ENCODE measurements at regions of chr1 and their contacts with region 1.

Region 1: GRCh38 chr1:109213785-109214468 is at the start of gene SARS1:
- DNase-seq: peak; percentile 77 to 96 (median 91)
- ATAC-seq: peak; percentile 91
- H3K4me3 ChIP-seq: peak within 1 kb of the TSS; percentile 97
- H3K4me3 Mint-ChIP-seq: peak within 1 kb of the TSS; percentile 94 to 100 (median 98)
- H3K27ac ChIP-seq: peak within 1 kb of the TSS; percentile 85
- H3K27ac Mint-ChIP-seq: peak within 1 kb of the TSS; percentile 85 to 98 (median 97)
- H3K4me1 ChIP-seq: peaks cover 22 to 27% of the 10 kb centered on the region in 2 donors
- H3K4me1 Mint-ChIP-seq: peaks cover 33 to 47% (median 42%) of the 10 kb centered on the region in 7 donors
- H3K27me3 ChIP-seq: no peaks in the 10 kb centered on the region
- H3K27me3 Mint-ChIP-seq: peaks cover 0 to 4% (median 0%) of the 10 kb centered on the region in 5 donors
- total RNA-seq, gene SARS1: 110 to 173 (median 135) TPM

Region 2: DNA sequence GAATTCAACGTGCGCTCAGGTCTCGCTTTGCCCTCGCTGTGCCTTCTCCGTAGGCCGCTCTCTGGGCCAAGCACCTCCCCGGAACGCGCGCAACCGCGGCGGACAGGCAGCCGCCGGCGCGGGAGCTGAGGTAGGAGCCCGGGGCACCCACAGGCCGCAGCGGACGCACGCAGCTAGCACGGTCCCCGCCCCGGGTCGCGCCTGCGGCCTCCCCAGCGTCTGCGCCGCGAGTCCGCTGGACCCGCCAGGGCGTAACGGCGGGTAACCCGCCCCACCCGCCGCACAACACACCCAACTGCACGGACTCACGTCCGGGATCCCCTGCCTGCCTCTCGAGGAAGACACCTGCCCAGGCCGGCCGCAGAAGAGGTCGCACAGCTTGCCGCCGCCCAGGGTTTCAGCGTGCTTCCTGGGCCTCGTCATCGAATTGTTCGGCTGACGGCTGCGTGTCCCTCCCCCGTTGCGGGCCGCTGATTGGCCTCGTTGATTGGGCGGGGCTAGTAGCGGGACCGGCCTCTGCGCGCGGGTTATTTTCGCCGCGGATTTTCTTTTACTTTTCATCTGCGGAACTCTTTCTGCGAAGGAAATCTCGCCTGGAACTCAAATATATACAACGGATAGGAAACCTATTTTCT is 250.8 kb before region 1 on chr1 and contains the start of gene CLCC1:
- CTCF ChIA-PET with region 1: no interaction called
- POLR2A ChIA-PET with region 1: no interaction called
- intact Hi-C with region 1: loop called in 1 of 2 experiments (anchors 5 kb)
- DNase-seq: peak; percentile 78 to 92 (median 89)
- ATAC-seq: peak; percentile 97
- H3K4me3 ChIP-seq: peak within 1 kb of the TSS; percentile 76
- H3K4me3 Mint-ChIP-seq: peak within 1 kb of the TSS; percentile 87 to 94 (median 90)
- H3K27ac ChIP-seq: peak within 1 kb of the TSS; percentile 85
- H3K27ac Mint-ChIP-seq: peak within 1 kb of the TSS; percentile 78 to 97 (median 92)
- H3K4me1 ChIP-seq: peaks cover 11 to 16% of the 10 kb centered on the region in 2 donors
- H3K4me1 Mint-ChIP-seq: peaks cover 21 to 48% (median 37%) of the 10 kb centered on the region in 7 donors
- H3K27me3 ChIP-seq: no peaks in the 10 kb centered on the region
- H3K27me3 Mint-ChIP-seq: peaks cover 0 to 15% (median 0%) of the 10 kb centered on the region in 5 donors
- total RNA-seq, gene CLCC1: 15.4 to 34.6 (median 25.2) TPM

Region 3: DNA sequence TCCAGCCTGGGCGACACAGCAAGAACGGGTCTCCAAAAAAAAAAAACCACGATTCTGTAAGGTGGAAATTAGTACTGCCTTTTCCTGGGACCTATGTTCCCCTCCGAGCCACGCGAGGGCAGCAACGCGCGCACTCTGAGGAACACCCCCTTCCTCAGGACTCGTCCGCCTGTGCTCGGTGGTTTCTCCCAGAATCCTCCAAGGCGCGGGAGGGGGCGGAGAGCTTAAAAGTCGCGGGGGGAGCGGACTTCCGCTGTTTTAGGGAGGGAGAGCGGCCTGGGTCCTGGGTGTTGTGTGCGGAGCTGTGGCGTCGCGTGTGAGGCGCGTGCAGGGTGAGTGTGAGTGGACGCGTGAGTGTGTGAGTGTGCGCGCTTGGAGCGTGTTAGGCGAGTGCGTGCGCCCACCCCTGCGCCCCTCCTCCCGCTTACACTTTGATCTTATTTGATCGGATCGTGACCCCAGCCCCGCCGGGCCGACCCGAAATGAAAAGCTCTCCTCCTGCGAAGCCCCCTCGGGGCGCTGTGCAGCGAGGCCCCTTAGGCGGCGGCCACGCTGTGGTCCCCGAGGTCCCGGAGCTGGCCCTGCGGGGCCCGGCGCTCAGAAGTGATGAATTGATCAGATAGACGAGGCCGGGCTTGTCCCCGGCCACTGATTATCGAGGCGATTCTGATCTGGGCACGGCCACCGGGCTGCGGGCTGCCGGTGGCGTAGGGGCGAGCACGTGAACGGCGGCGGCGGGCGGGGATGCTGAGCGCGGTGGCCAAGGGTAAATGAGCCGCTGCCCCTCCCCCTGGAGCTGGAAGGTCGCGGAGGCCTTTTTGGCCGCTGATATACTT is 113.8 kb before region 1 on chr1:
- CTCF ChIA-PET with region 1: no interaction called
- POLR2A ChIA-PET with region 1: interaction called, 31 read pairs
- intact Hi-C with region 1: loop called in 1 of 2 experiments (anchors 1 kb)
- DNase-seq: peak; percentile 90 to 98 (median 97)
- ATAC-seq: peak; percentile 98
- H3K4me3 ChIP-seq: peak overlapping the region; percentile 80
- H3K4me3 Mint-ChIP-seq: peak overlapping the region; percentile 93 to 99 (median 98)
- H3K27ac ChIP-seq: peak overlapping the region; percentile 88
- H3K27ac Mint-ChIP-seq: peak overlapping the region; percentile 92 to 99 (median 96)
- H3K4me1 ChIP-seq: peaks cover 0 to 5% of the 10 kb centered on the region in 2 donors
- H3K4me1 Mint-ChIP-seq: peaks cover 5 to 22% (median 13%) of the 10 kb centered on the region in 7 donors
- H3K27me3 ChIP-seq: no peaks in the 10 kb centered on the region
- H3K27me3 Mint-ChIP-seq: peaks cover 0 to 2% (median 0%) of the 10 kb centered on the region in 5 donors

Region 4: DNA sequence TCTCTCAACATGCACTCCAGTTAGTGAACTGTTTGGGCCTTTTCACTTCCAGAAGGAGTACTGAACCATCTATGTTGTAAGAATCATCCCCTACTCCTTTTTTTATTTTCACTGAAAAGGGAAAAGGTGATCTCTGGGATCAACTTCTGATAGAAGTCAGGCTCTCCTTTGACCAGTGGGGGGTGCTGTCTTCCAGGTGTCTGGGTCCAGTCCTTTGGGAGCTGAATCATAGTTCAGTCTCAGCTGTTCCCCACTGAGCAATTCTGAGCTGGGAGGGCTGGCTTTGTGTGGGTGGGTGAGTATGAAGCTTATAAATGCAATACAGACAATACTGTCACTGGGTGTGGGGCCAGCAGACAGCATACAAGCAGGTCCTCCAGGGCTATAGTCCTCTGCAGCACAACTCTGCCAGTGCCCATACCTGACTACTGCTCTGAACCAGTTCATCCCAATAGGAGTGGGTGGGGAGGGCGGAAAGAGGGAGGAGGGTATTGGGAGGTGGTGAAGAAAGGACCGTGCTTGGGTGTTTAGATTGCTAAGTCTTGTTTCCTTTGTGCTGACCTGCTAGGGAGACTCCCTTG is 12.7 kb before region 1 on chr1:
- CTCF ChIA-PET with region 1: interaction called, 5 read pairs
- POLR2A ChIA-PET with region 1: interaction called, 14 read pairs
- intact Hi-C with region 1: loop called in 1 of 2 experiments (anchors 2 kb)
- DNase-seq: peak in 3 of 9 donors; percentile 11 to 60 (median 17)
- ATAC-seq: no peak
- H3K4me3 ChIP-seq: no peak overlapping the region
- H3K4me3 Mint-ChIP-seq: no peak overlapping the region
- H3K27ac ChIP-seq: no peak overlapping the region
- H3K27ac Mint-ChIP-seq: peak overlapping the region in 2 of 9 donors; percentile 26 to 35
- H3K4me1 ChIP-seq: peaks cover 0 to 12% of the 10 kb centered on the region in 2 donors
- H3K4me1 Mint-ChIP-seq: peaks cover 5 to 28% (median 19%) of the 10 kb centered on the region in 7 donors
- H3K27me3 ChIP-seq: no peaks in the 10 kb centered on the region
- H3K27me3 Mint-ChIP-seq: no peaks in the 10 kb centered on the region

Region 5: GRCh38 chr1:109282952-109283747 is 69.2 kb after region 1 on chr1 and contains the start of gene PSRC1:
- CTCF ChIA-PET with region 1: interaction called, 3 read pairs
- POLR2A ChIA-PET with region 1: interaction called, 5 read pairs
- intact Hi-C with region 1: loop called (anchors 1 kb)
- DNase-seq: peak; percentile 78 to 94 (median 88)
- ATAC-seq: peak; percentile 98
- H3K4me3 ChIP-seq: peak within 1 kb of the TSS; percentile 92
- H3K4me3 Mint-ChIP-seq: peak within 1 kb of the TSS; percentile 89 to 99 (median 96)
- H3K27ac ChIP-seq: peak within 1 kb of the TSS; percentile 65
- H3K27ac Mint-ChIP-seq: peak within 1 kb of the TSS; percentile 55 to 94 (median 88)
- H3K4me1 ChIP-seq: peaks cover 8 to 11% of the 10 kb centered on the region in 2 donors
- H3K4me1 Mint-ChIP-seq: peaks cover 6 to 29% (median 14%) of the 10 kb centered on the region in 7 donors
- H3K27me3 ChIP-seq: no peaks in the 10 kb centered on the region
- H3K27me3 Mint-ChIP-seq: peaks cover 0 to 8% (median 0%) of the 10 kb centered on the region in 5 donors
- total RNA-seq, gene PSRC1: 0.38 to 16.1 (median 1.3) TPM in 4 of 5 experiments, not detected in the other

Region 6: DNA sequence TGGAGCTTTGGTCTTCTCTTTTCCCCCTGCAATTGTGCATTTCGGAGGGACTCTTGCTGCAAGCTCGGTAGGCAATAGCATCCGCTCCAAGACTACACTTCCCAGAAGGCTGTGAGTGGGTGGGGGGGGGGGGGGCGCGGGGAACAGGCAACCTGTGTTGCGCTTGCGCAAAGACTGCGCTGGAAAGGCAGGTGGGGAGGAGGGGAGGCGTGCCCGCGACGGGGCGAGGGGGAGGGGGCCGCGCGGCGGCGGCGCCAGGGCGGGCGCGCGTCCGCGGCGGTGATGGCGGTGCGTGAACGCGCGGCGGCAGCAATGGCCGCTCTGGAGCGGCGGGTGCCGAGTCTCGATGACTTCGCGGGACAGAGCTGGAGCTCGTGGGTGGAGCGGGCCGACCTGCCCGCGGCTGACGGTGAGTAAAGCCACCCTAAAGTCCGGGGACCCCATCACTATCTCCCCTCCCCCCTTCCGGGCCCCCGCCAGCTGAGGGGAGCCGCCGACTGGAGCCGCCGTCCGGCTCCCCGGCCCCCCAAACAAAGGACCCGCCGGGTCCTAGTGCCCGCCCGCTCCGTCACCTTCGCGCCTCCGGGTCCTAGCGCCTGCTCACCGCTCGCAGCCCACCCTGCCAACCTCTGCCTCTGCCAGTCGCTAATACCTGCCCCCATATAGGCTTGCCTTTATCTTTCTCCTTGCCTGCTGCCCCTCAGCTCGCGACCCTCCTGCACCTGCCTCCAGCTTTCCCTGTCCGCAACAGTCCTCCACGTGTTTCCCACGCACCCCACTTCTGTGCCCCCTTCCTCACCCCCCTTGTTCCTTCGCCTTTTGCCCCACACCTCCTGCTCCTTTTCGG is 270.0 kb after region 1 on chr1 and contains the start of gene ATXN7L2:
- CTCF ChIA-PET with region 1: no interaction called
- POLR2A ChIA-PET with region 1: no interaction called
- intact Hi-C with region 1: loop called (anchors 1 to 5 kb)
- DNase-seq: peak; percentile 89 to 95 (median 93)
- ATAC-seq: peak; percentile 91
- H3K4me3 ChIP-seq: peak within 1 kb of the TSS; percentile 98
- H3K4me3 Mint-ChIP-seq: peak within 1 kb of the TSS; percentile 93 to 99 (median 96)
- H3K27ac ChIP-seq: peak within 1 kb of the TSS; percentile 88
- H3K27ac Mint-ChIP-seq: peak within 1 kb of the TSS; percentile 83 to 97 (median 92)
- H3K4me1 ChIP-seq: peaks cover 9 to 14% of the 10 kb centered on the region in 2 donors
- H3K4me1 Mint-ChIP-seq: peaks cover 27 to 44% (median 35%) of the 10 kb centered on the region in 7 donors
- H3K27me3 ChIP-seq: no peaks in the 10 kb centered on the region
- H3K27me3 Mint-ChIP-seq: peaks cover 0 to 23% (median under 1%) of the 10 kb centered on the region in 5 donors
- total RNA-seq, gene ATXN7L2: 10.5 to 12.8 (median 11.7) TPM

Region 7: GRCh38 chr1:110407260-110408210 is 1193.6 kb after region 1 on chr1 and contains the start of gene LAMTOR5:
- CTCF ChIA-PET with region 1: no interaction called
- POLR2A ChIA-PET with region 1: no interaction called
- intact Hi-C with region 1: loop called in 1 of 2 experiments (anchors 10 kb)
- DNase-seq: peak; percentile 77 to 91 (median 89)
- ATAC-seq: peak; percentile 98
- H3K4me3 ChIP-seq: peak within 1 kb of the TSS; percentile 95
- H3K4me3 Mint-ChIP-seq: peak within 1 kb of the TSS; percentile 88 to 100 (median 99)
- H3K27ac ChIP-seq: peak within 1 kb of the TSS; percentile 92
- H3K27ac Mint-ChIP-seq: peak within 1 kb of the TSS; percentile 96 to 100 (median 99)
- H3K4me1 ChIP-seq: peaks cover 19% of the 10 kb centered on the region in 2 donors
- H3K4me1 Mint-ChIP-seq: peaks cover 9 to 39% (median 27%) of the 10 kb centered on the region in 7 donors
- H3K27me3 ChIP-seq: no peaks in the 10 kb centered on the region
- H3K27me3 Mint-ChIP-seq: no peaks in the 10 kb centered on the region
- total RNA-seq, gene LAMTOR5: 63.3 to 146 (median 69.4) TPM